ENCODE measurements at regions of chr14 and their contacts with region 1.

Region 1: GRCh38 chr14:99266181-99267178 is 5.5 kb downstream of the BCL11B start:
- DNase-seq: peak; percentile 74

Region 2: DNA sequence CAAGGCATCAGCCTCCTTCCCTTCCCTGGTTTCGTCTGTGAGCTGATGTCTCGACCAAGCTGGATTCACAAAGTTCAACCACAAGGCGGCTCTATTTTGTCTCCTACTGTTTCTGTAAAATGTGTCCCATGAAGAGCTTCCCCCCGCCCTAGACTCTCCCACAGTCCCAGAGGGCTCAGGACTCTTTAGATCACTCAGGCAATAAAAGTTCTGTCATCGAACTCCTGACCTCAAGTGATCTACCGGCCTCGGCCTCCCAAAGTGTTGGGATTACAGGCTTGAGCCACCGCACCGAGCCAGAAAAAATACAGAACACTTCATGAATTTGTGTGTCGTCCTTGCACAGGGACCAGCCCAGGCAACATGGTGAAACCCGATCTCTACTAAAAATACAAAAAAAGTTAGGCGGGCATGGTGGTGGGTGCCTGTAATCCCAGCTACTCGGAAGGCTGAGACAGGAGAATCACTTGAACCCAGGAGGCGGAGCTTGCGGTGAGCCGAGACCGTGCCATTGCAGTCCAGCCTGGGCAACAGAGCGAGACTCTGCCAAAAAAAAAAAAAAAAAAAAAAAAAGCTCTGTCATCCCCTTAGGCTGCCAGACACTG is 143.9 kb before region 1 on chr14:
- CTCF ChIA-PET with region 1: interaction called, 17 read pairs
- POLR2A ChIA-PET with region 1: interaction called, 7 read pairs
- DNase-seq: peak; percentile 62

Region 3: GRCh38 chr14:99252940-99253868 is 13.3 kb before region 1 on chr14:
- CTCF ChIA-PET with region 1: interaction called, 9 read pairs
- POLR2A ChIA-PET with region 1: interaction called, 21 read pairs
- DNase-seq: peak; percentile 34

Region 4: DNA sequence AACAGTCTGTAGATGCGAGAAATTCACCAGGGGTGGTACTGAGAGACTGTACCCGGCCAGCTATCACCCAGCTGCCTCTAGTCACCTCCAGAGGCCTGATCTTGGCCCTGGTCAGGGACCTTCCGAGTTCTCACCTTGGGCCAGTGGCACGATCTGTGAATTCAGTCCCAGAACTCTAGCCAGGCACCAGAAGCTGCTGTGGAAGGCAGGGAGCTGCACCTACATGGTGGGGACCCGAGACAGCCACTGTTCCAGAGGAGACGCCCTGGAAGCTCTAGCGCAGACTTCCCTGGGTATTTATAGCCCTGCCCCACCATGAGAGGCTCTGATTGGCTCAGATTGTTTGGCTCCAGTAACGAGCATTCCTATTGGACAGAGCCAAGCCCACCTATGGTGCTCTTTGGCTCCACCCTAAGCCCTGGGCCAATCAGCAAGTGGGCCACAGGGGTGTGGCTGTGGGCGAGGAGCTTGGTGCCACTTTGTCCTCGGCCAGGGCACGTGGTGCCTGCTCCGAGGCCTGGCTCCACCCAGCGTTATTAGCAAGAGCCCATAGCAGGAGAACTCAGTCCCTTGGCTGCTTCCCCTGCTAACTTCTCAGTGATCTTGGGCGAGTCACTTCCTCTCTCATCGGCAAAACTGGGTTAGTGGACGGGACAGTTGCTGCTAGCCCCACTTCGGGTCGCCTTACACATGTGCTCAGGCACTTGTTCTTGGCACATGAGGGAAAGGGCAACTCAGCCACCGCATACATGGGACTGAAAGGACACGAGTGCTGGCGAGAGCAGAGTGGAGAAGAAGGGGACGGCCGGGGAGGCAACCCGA is 94.5 kb after region 1 on chr14:
- CTCF ChIA-PET with region 1: no interaction called
- POLR2A ChIA-PET with region 1: no interaction called
- DNase-seq: peak; percentile 25